ENCODE measurements at regions of chr3 and their contacts with region 1.

Region 1: DNA sequence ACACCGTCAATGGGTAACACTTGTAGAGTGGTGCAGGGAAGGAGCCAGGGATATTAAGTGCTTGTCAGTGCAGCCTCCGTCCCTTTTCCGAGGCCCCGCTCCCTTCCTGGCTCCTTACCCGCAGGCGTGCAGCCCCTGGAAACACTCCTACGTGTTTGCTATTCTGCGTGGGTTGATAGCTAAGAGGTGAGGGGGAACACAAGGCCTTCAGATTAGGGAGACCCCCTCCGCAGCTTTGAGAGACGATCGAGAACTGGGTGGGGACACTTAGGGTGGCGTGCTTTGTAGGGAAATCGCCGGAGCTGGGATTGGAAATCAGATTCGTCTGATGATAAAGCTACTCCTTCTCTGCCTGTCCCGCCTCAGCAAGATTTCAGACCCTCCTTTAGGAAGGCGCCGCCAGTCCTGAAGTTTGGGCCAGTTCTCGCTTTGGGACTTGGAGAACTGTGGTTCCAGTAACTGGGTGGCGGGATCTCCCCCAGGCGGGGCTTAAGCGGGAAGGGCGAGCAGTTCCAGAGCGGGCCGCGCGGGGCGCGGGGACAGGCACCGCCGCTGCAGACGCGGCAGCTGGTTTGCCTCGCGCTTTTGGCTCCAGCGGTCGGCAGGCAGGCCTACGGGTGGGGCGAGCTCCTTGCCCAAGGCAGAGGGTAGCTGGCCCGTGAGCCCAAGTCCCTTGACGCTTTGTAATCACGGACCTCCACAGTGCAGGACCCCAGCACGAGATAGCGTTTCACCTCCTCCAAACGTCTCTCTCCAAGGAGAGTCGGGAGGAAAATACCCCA is 8.0 kb upstream of the FAM107A start:
- DNase-seq: peak; percentile 71
- H3K4me3 Mint-ChIP-seq: peak overlapping the region; percentile 90
- H3K27ac Mint-ChIP-seq: no peak overlapping the region
- H3K4me1 Mint-ChIP-seq: peaks cover 19% of the 10 kb centered on the region
- H3K27me3 Mint-ChIP-seq: peaks cover 53% of the 10 kb centered on the region

Region 2: GRCh38 chr3:58471025-58471887 is 113.9 kb before region 1 on chr3:
- CTCF ChIA-PET with region 1: no interaction called
- POLR2A ChIA-PET with region 1: no interaction called
- DNase-seq: peak; percentile 75
- H3K4me3 Mint-ChIP-seq: peak overlapping the region; percentile 62
- H3K27ac Mint-ChIP-seq: peak overlapping the region; percentile 89
- H3K4me1 Mint-ChIP-seq: peaks cover 61% of the 10 kb centered on the region
- H3K27me3 Mint-ChIP-seq: no peaks in the 10 kb centered on the region

Region 3: GRCh38 chr3:58568572-58569286 is 16.5 kb before region 1 on chr3:
- CTCF ChIA-PET with region 1: interaction called, 31 read pairs
- POLR2A ChIA-PET with region 1: no interaction called
- DNase-seq: peak; percentile 78
- H3K4me3 Mint-ChIP-seq: no peak overlapping the region
- H3K27ac Mint-ChIP-seq: no peak overlapping the region
- H3K4me1 Mint-ChIP-seq: peaks cover 6% of the 10 kb centered on the region
- H3K27me3 Mint-ChIP-seq: peaks cover 7% of the 10 kb centered on the region

Region 4: DNA sequence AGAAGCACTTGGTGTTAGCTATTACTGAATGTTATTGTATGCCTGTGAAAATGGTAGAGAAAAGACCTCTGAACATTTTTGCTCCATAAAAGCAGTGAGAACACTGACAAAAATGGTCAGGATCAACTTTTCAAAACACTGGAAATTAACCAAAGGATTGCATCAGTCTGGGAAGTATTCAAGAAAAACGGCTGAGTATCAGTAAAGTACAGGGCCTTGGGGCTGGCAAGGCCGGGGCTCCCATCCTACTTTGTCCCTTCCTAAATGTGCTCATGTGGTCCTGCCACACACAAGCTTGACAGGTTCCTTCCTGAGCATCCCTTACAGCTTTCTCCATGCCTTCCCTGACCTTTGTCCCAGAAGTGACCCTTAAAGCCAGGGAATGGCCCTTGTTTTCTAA is 380.7 kb after region 1 on chr3:
- CTCF ChIA-PET with region 1: no interaction called
- POLR2A ChIA-PET with region 1: no interaction called
- DNase-seq: no peak
- H3K4me3 Mint-ChIP-seq: no peak overlapping the region
- H3K27ac Mint-ChIP-seq: no peak overlapping the region
- H3K4me1 Mint-ChIP-seq: no peaks in the 10 kb centered on the region
- H3K27me3 Mint-ChIP-seq: no peaks in the 10 kb centered on the region